Mammary epithelial cell (primary cell): ENCODE measurements at regions of chr10 and their contacts with region 1.

Region 1: DNA sequence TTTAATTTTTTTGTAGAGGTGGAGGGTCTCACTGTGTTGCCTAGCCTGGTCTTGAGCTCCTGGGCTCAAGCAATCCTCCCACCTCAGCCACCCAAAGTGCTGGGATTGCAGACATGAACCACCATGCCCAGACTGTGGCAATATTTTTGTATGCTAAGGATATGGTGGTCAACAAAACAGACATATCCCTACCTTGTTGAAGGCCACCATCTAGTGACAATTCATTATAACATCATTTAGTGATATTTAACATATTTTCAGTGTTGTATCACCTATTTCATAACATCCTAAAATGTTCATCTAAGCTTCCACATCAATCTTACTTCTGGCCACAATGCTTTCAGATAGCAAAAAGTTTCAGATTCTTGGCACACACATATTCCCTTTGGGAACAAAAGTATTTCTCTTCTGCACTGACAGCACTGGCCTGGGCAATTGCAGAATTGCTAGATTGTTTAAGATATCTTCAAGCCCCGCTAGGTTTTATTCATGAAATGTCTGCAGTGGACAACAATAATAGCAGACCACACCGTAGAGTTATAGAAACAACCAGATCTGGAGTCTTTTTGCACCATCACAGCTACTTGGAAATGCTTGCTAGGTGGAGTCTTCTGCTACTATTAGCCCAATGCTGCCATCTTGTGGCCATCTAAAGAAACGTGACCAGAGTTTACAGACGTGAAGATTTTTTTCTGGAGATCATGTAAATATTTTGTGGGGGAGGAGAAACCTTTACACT is 58.4 kb downstream of the DNAJC12 start:
- DNase-seq: peak; percentile 46
- H3K4me3 ChIP-seq: no peak overlapping the region
- H3K27ac ChIP-seq: no peak overlapping the region
- H3K4me1 ChIP-seq: no peaks in the 10 kb centered on the region
- H3K27me3 ChIP-seq: no peaks in the 10 kb centered on the region
- CTCF ChIP-seq: peak; percentile 57 to 80

Region 2: GRCh38 chr10:66941491-66941890 is 838.1 kb before region 1 on chr10:
- CTCF ChIA-PET with region 1: no interaction called
- dilution Hi-C with region 1: no loop called
- in situ Hi-C with region 1: no loop called
- intact Hi-C with region 1: loop called (anchors 5 kb)
- DNase-seq: no peak
- H3K4me3 ChIP-seq: no peak overlapping the region
- H3K27ac ChIP-seq: no peak overlapping the region
- H3K4me1 ChIP-seq: no peaks in the 10 kb centered on the region
- H3K27me3 ChIP-seq: no peaks in the 10 kb centered on the region
- CTCF ChIP-seq: no peak

Region 3: GRCh38 chr10:67520924-67521520 is 258.6 kb before region 1 on chr10:
- CTCF ChIA-PET with region 1: interaction called, 4 read pairs
- dilution Hi-C with region 1: no loop called
- in situ Hi-C with region 1: no loop called
- intact Hi-C with region 1: loop called (anchors 2 kb)
- DNase-seq: peak; percentile 42
- H3K4me3 ChIP-seq: no peak overlapping the region
- H3K27ac ChIP-seq: no peak overlapping the region
- H3K4me1 ChIP-seq: no peaks in the 10 kb centered on the region
- H3K27me3 ChIP-seq: no peaks in the 10 kb centered on the region
- CTCF ChIP-seq: peak; percentile 73 to 79

Region 4: GRCh38 chr10:67666416-67667034 is 113.1 kb before region 1 on chr10:
- CTCF ChIA-PET with region 1: no interaction called
- dilution Hi-C with region 1: no loop called
- in situ Hi-C with region 1: no loop called
- intact Hi-C with region 1: loop called (anchors 1 kb)
- DNase-seq: peak; percentile 6
- H3K4me3 ChIP-seq: no peak overlapping the region
- H3K27ac ChIP-seq: no peak overlapping the region
- H3K4me1 ChIP-seq: no peaks in the 10 kb centered on the region
- H3K27me3 ChIP-seq: no peaks in the 10 kb centered on the region
- CTCF ChIP-seq: peak; percentile 38 to 42

Region 5: DNA sequence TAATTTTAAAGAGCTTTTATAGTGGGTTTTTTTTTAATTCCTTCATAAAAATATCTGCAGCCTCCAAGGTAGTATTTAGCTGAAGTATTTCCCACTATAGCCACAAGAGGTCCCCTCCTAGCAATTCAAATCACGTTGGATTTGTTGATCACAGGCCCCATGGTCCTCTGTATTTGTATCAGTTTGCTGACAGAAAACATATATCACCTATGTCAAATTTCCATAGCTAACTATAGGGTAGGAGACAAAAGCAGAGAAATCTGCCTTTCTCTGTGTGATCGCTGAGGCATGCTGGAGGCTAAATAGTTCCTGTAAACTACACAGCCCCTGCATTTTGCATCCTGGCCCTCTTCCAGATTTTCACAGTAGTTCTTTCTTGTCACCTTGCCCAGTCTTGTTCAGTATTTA is 81.9 kb before region 1 on chr10:
- CTCF ChIA-PET with region 1: interaction called, 20 read pairs
- dilution Hi-C with region 1: no loop called
- in situ Hi-C with region 1: loop called in 1 of 2 experiments (anchors 5 kb)
- intact Hi-C with region 1: loop called (anchors 1 kb)
- DNase-seq: peak; percentile 16
- H3K4me3 ChIP-seq: no peak overlapping the region
- H3K27ac ChIP-seq: no peak overlapping the region
- H3K4me1 ChIP-seq: no peaks in the 10 kb centered on the region
- H3K27me3 ChIP-seq: peaks cover 4% of the 10 kb centered on the region
- CTCF ChIP-seq: peak; percentile 59 to 70